ENCODE measurements at regions of chr22 and their contacts with region 1.

Region 1: GRCh38 chr22:20016734-20017621 is at the start of gene ARVCF:
- DNase-seq: peak; percentile 94
- ATAC-seq: peak; percentile 72
- H3K4me3 Mint-ChIP-seq: peak within 1 kb of the TSS; percentile 78
- H3K27ac Mint-ChIP-seq: peak within 1 kb of the TSS; percentile 25
- H3K4me1 Mint-ChIP-seq: peaks cover 15% of the 10 kb centered on the region
- H3K27me3 Mint-ChIP-seq: peaks cover 6% of the 10 kb centered on the region
- total RNA-seq, gene ARVCF: 1.3 to 2.1 TPM

Region 2: GRCh38 chr22:19730655-19731360 is 286.2 kb before region 1 on chr22:
- CTCF ChIA-PET with region 1: interaction called, 5 read pairs
- POLR2A ChIA-PET with region 1: no interaction called
- intact Hi-C with region 1: loop called in 1 of 2 experiments (anchors 5 kb)
- DNase-seq: peak; percentile 92
- ATAC-seq: peak; percentile 93
- H3K4me3 Mint-ChIP-seq: peak overlapping the region; percentile 56
- H3K27ac Mint-ChIP-seq: no peak overlapping the region
- H3K4me1 Mint-ChIP-seq: no peaks in the 10 kb centered on the region
- H3K27me3 Mint-ChIP-seq: no peaks in the 10 kb centered on the region

Region 3: GRCh38 chr22:19962233-19962908 is 54.6 kb before region 1 on chr22:
- CTCF ChIA-PET with region 1: interaction called, 3 read pairs
- POLR2A ChIA-PET with region 1: no interaction called
- intact Hi-C with region 1: loop called in 1 of 2 experiments (anchors 2 kb)
- DNase-seq: peak; percentile 87
- ATAC-seq: peak; percentile 82
- H3K4me3 Mint-ChIP-seq: no peak overlapping the region
- H3K27ac Mint-ChIP-seq: no peak overlapping the region
- H3K4me1 Mint-ChIP-seq: peaks cover 7% of the 10 kb centered on the region
- H3K27me3 Mint-ChIP-seq: no peaks in the 10 kb centered on the region

Region 4: GRCh38 chr22:20079745-20080444 is 62.9 kb after region 1 on chr22 and contains the start of gene DGCR8:
- CTCF ChIA-PET with region 1: no interaction called
- POLR2A ChIA-PET with region 1: interaction called, 3 read pairs
- intact Hi-C with region 1: loop called (anchors 1 to 2 kb)
- DNase-seq: peak; percentile 78
- ATAC-seq: peak; percentile 92
- H3K4me3 Mint-ChIP-seq: peak within 1 kb of the TSS; percentile 88
- H3K27ac Mint-ChIP-seq: peak within 1 kb of the TSS; percentile 80
- H3K4me1 Mint-ChIP-seq: peaks cover 36% of the 10 kb centered on the region
- H3K27me3 Mint-ChIP-seq: no peaks in the 10 kb centered on the region
- total RNA-seq, gene DGCR8: 31.8 to 32.3 TPM

Region 5: DNA sequence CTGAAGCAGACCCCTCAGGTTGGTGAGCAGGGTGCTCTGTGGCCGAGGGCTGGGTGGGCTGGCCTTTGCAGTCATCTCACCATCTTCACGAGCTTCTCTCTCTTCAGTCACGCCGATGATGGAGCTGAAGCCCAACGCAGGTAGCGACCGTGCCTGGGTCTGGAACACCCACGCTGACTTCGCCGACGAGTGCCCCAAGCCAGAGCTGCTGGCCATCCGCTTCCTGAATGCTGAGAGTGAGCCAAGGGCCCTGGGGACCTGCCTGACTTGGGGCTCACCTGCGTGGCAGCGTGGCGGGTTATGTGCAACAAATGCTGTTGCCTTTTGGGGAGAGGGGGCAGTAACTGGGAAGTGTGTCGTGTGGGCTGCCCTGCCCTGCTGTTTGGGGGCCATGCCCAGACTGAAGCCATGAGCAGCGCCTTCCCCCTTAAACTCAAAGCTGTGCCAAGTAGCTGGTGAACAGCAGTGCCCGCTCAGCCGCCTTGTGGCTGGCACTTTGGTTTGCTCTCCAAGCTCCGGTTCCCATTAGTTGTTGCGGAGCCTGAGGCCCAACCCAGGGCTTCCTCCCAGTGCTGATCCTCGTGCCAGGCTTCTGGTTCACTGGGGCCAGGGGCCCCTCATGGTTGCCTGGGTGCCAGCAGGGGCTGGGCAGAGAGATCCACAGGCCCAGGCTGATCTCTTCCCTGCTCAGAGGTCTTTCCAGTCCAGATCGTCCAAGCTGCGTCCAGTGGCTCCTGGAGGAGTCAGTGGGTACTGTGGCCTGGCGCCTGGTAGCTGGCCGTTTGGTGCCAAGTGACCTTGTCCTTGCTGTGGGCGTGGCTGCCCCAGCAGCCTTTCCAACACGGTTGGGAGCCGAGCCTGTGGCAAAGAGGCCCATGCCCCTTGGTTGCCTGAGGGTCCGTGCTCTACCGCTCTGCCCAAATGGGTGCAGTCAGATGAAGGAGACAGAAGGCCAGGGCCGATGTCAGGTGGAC is 108.5 kb after region 1 on chr22:
- CTCF ChIA-PET with region 1: no interaction called
- POLR2A ChIA-PET with region 1: no interaction called
- intact Hi-C with region 1: no loop called
- DNase-seq: no peak
- ATAC-seq: no peak
- H3K4me3 Mint-ChIP-seq: no peak overlapping the region
- H3K27ac Mint-ChIP-seq: no peak overlapping the region
- H3K4me1 Mint-ChIP-seq: peaks cover 28% of the 10 kb centered on the region
- H3K27me3 Mint-ChIP-seq: no peaks in the 10 kb centered on the region

Region 6: GRCh38 chr22:20298803-20299735 is 282.1 kb after region 1 on chr22:
- CTCF ChIA-PET with region 1: no interaction called
- POLR2A ChIA-PET with region 1: no interaction called
- intact Hi-C with region 1: loop called in 1 of 2 experiments (anchors 1 kb)
- DNase-seq: peak; percentile 95
- ATAC-seq: peak; percentile 91
- H3K4me3 Mint-ChIP-seq: peak overlapping the region; percentile 71
- H3K27ac Mint-ChIP-seq: peak overlapping the region; percentile 43
- H3K4me1 Mint-ChIP-seq: no peaks in the 10 kb centered on the region
- H3K27me3 Mint-ChIP-seq: peaks cover 7% of the 10 kb centered on the region

Measured in activated CD4-positive, alpha-beta T cell treated with anti-CD3 and anti-CD28 coated beads for 36 hours (primary cell).